Vagina (tissue), 2 donors: ENCODE measurements at regions of chr17 and their contacts with region 1.

Region 1: GRCh38 chr17:5329784-5330557 is 47.9 kb downstream of the RABEP1 start:
- DNase-seq: no peak
- H3K4me3 ChIP-seq: no peak overlapping the region
- H3K27ac ChIP-seq: no peak overlapping the region
- H3K4me1 ChIP-seq: no peaks in the 10 kb centered on the region
- H3K27me3 ChIP-seq: no peaks in the 10 kb centered on the region
- CTCF ChIP-seq: no peak
- POLR2A ChIP-seq: no peak

Region 2: DNA sequence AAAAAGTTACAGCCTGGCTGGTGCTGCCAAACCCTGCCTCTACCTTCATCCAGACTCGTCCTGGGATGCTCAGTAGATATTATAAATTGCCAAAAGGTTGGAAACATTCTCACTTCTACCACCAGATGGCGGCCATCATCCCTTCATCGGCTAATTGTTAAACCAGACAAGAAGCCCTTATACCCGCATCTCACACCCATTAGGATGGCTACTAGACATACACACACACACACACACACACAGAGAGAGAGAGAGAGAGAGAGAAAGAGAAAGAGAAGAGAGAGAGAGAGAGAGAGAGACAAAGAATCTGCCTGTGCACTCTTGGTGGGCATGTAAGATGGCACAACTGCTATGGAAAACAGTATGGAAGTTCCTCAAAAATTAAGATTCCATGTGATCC is 80.4 kb before region 1 on chr17:
- intact Hi-C with region 1: loop called (anchors 10 kb)
- DNase-seq: no peak
- H3K4me3 ChIP-seq: no peak overlapping the region
- H3K27ac ChIP-seq: no peak overlapping the region
- H3K4me1 ChIP-seq: no peaks in the 10 kb centered on the region
- H3K27me3 ChIP-seq: no peaks in the 10 kb centered on the region
- CTCF ChIP-seq: peak in 2 of 3 experiments; percentile 42 to 62
- POLR2A ChIP-seq: no peak

Region 3: GRCh38 chr17:5986644-5987043 is 656.7 kb after region 1 on chr17:
- intact Hi-C with region 1: no loop called
- DNase-seq: no peak
- H3K4me3 ChIP-seq: no peak overlapping the region
- H3K27ac ChIP-seq: no peak overlapping the region
- H3K4me1 ChIP-seq: no peaks in the 10 kb centered on the region
- H3K27me3 ChIP-seq: no peaks in the 10 kb centered on the region
- CTCF ChIP-seq: no peak
- POLR2A ChIP-seq: no peak